ENCODE measurements at regions of chr5 and their contacts with region 1.

Region 1: DNA sequence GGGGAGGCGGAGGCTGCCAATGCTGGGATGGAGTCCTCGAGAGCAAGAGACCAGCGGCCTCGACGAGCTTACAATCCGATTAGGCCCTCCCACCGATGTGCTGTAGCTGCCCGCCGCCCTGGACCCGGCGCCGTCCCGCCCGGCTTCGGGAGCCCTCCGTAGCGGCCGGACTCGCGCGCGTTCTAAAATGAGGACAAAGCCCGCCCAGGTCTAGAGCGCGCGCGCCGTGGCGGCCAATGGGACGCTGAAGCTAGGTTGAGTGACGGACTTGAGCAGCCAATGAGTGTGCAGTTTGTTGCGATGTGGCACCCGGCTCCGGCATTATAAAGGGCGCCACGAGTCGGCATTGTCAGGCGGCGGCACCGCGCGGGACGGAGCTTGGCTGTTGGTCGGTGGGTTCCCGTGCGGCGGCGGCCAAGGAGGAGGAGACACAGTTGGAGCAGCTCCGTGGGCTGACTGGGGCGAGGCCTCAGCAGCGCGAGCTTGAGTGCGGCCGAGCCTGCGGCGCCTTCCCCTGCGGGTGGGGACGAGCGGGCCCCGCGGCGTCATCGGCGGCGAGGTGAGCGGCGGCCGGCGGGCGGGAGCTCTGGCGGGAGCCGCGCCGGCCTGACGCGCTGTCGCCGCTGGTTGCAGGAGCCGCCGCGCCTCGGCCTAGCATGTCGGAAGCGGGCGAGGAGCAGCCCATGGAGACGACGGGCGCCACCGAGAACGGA is at the start of gene HNRNPAB:
- DNase-seq: peak; percentile 98

Region 2: DNA sequence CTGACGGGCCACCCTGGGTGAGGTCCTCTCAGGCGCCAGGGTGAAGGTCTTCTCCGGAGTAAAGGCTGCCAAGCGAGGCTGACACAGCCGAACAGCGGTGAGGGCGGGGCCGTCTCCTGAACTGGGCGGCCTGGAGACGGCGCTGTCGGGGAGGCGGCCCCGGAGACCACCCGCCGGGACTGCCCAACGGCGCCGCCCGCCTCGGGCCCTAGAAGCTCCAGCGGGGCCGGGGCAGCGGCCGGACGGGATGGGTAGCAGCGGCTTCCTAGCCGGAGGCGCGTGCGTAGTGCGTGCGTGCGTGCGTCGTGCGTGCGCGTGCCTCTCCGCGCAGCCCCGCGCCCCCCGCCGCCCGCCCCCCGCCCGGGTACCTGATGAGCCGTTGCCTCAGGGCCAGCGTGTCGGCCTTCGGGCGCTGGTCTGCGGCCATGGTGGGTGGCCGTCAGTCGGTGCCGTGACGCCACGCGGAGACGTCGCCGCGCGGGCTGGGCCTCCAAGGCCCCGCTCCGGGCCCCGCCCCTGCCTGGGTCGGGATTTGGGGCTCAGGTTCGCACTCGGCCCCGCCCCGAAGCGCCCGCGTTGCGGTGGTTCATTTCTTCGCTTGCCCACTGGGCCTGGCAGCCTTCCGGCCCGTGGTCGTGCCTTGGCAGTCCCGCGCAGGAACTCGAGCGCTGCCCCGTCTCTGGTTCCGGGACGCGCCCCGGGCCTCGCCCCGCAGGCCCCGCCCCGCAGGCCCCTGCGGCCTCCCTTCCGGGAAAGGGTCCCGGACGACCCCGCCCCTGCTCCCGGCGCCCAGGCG is 28.0 kb after region 1 on chr5 and contains the start of gene PHYKPL:
- CTCF ChIA-PET with region 1: interaction called, 5 read pairs
- POLR2A ChIA-PET with region 1: interaction called, 15 read pairs
- DNase-seq: peak; percentile 86

Region 3: DNA sequence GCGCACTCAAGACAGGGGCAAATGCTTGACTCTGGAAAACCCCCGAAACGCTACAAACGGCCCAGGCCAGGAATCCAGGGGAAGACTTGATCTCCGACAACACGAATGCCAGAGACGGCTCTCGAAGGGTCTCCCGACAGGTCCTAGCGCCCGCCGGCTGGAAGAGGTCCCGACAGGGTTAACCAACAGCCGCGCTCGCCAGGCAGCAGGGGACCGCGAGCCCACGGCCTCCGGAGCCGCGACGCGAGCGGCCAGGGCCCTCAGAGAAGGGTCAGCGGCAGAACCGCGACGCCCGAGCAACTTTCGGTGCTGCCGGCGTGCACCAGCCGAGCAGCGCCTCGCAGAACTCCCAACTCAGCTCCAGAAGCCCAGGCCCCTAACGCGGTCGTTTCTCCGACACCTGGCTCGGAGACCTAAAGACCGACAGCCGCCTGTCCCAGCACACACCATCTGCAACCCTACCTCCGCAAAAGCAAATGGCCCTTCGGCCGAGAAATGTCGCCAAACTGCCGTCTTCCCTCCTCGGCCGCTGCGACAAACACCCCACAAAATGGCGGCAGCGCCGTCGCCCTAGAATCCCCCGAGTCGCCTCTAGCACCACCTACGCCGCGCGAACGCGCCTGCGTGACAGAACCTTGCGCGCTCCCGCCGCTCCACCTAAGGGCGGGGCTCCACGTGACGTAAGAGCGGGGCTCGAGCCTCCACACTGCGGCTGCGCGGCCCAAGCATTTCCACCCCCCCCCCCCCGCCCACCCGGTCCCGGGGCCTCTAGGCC is 422.3 kb after region 1 on chr5 and contains the start of gene CLK4:
- CTCF ChIA-PET with region 1: no interaction called
- POLR2A ChIA-PET with region 1: interaction called, 12 read pairs
- DNase-seq: peak; percentile 98